Pancreas (tissue), 10 donors: ENCODE measurements at regions of chr22 and their contacts with region 1.

Region 1: DNA sequence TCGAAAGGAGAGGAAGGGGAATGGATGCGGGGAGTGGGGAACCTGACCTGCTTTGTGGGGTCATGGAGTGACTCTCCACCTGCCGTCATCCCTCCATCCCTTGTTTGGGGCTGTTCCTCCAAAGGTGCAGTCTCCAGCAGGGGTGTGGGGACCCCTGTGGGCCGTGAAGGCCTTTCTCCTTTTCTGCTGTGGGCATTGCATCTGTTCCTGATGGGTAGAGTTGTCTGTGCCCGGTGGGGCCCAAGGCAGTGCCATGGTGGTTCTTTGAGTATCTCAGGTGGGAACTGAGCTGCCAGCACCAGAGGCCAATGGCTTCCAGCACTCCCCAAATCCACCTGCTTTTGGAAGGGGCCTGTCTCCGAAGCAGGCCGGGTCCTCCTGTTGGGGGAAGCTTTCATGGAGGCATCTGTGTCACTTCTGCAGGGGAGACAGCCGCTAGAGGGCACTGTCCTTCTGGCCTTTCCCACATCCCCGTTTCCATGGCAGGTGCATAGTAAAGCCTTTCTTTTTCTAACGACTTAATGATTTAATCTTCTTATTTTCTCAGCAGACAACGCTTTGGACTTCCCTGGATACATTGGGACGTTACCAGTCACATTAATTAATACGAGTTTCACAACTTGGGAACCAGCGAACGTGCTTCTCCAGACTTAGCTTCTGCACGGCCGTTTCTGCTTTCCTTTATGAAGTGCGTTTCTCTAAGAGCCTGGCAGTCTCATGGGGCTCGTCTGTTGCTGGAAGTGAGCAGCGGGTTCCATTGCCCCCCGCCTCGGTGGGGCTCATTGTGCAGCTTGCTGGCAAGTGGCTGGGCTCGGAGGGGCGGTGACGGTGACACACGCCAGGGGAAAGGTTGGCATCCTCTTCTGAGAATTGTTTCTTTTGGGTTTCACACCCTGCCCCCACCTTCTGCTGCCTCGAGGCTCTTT is 57.1 kb downstream of the PARVB start:
- DNase-seq: peak in 5 of 6 donors; percentile 37 to 85 (median 63)
- ATAC-seq: peak in 3 of 4 donors; percentile 80 to 83 (median 81)
- H3K4me3 ChIP-seq: no peak overlapping the region
- H3K27ac ChIP-seq: no peak overlapping the region
- H3K4me1 ChIP-seq: no peaks in the 10 kb centered on the region
- H3K27me3 ChIP-seq: no peaks in the 10 kb centered on the region
- CTCF ChIP-seq: peak; percentile 71 to 78 (median 75)

Region 2: GRCh38 chr22:44192098-44192810 is 111.1 kb after region 1 on chr22:
- intact Hi-C with region 1: no loop called
- DNase-seq: peak in 1 of 6 donors; percentile 23
- ATAC-seq: no peak
- H3K4me3 ChIP-seq: no peak overlapping the region
- H3K27ac ChIP-seq: no peak overlapping the region
- H3K4me1 ChIP-seq: no peaks in the 10 kb centered on the region
- H3K27me3 ChIP-seq: no peaks in the 10 kb centered on the region
- CTCF ChIP-seq: no peak

Region 3: DNA sequence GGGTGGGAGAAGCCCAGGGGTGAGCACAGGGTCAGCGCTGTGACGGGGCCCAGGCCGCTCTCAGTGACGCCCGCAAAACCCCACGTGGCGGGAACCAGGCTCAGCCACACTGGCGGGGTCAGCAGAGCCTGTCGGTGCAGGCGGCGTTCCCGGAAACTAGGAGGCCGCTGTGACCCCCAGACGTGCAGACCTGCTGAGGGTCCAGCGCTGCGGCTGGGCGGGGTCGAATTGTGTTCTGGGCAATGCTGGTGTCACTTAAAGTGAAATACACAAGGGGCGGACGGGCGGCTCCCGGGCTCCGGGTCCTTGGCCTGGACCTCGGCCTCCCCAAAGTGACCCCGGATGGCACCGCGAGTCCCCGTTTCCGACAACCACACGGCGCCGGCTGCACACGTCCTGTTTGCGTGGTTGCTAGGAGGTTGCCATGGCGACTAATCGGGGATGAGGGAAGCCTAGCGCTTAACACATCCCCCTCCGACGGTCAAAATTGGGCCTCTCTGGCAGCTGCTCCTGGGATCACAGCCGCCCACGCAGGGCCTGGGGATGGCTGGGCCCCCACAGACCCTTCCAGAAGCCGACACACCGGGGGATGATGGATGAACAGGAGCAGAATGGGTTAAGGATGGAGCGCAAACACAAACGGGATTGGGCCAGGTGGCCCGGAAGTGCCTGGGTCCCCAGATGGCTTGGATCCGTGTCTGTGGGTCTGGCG is 539.1 kb after region 1 on chr22:
- intact Hi-C with region 1: loop called in 2 of 3 experiments (anchors 5 kb)
- DNase-seq: peak in 4 of 6 donors; percentile 25 to 59 (median 36)
- ATAC-seq: peak in 3 of 4 donors; percentile 39 to 74 (median 72)
- H3K4me3 ChIP-seq: no peak overlapping the region
- H3K27ac ChIP-seq: no peak overlapping the region
- H3K4me1 ChIP-seq: no peaks in the 10 kb centered on the region
- H3K27me3 ChIP-seq: peaks cover 0 to 10% (median 2%) of the 10 kb centered on the region in 4 donors
- CTCF ChIP-seq: no peak